Vagina (tissue), 2 donors: ENCODE measurements at regions of chr11 and their contacts with region 1.

Region 1: GRCh38 chr11:13335319-13335718 is 57.7 kb downstream of the BMAL1 start:
- DNase-seq: no peak
- H3K4me3 ChIP-seq: no peak overlapping the region
- H3K27ac ChIP-seq: no peak overlapping the region
- H3K4me1 ChIP-seq: peaks cover 64% of the 10 kb centered on the region
- H3K27me3 ChIP-seq: no peaks in the 10 kb centered on the region
- CTCF ChIP-seq: peak in 2 of 3 experiments; percentile 50 to 73
- POLR2A ChIP-seq: no peak

Region 2: DNA sequence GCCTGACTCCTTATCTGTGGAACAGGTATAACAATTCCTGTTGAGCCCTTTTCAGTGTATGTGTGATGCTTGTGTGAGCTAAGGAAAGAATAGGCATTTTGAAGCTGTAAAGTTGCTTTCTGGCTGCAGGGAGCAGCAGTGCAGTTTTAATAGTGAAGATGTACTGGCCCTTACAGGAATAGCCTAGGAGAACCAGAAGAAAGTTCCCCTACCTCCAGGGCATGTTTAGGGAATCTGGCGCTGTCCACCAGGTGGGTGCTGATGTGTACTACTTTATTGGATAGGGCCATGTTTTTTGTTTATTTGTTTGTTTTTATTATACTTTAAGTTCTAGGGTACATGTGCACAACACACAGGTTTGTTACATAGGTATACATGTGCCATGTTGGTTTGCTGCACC is 46.2 kb before region 1 on chr11:
- intact Hi-C with region 1: loop called (anchors 10 kb)
- DNase-seq: no peak
- H3K4me3 ChIP-seq: no peak overlapping the region
- H3K27ac ChIP-seq: no peak overlapping the region
- H3K4me1 ChIP-seq: peaks cover 6% of the 10 kb centered on the region
- H3K27me3 ChIP-seq: no peaks in the 10 kb centered on the region
- CTCF ChIP-seq: no peak
- POLR2A ChIP-seq: no peak

Region 3: GRCh38 chr11:13668102-13668956 is 333.0 kb after region 1 on chr11 and contains the start of gene FAR1:
- intact Hi-C with region 1: no loop called
- DNase-seq: peak; percentile 98 to 100
- H3K4me3 ChIP-seq: peak within 1 kb of the TSS; percentile 86 to 93
- H3K27ac ChIP-seq: peak within 1 kb of the TSS; percentile 84
- H3K4me1 ChIP-seq: peaks cover 33% of the 10 kb centered on the region
- H3K27me3 ChIP-seq: no peaks in the 10 kb centered on the region
- CTCF ChIP-seq: peak in 1 of 3 experiments; percentile 43
- POLR2A ChIP-seq: peak in 1 of 2 donors; percentile 81
- total RNA-seq, gene FAR1: 77.6 TPM